Activated CD8-positive, alpha-beta memory T cell treated with anti-CD3 and anti-CD28 coated beads, Interleukin-2, amount 10 ng/mL, durations not matched to agents 7 days and 5 days (primary cell): ENCODE measurements at regions of chr17 and their contacts with region 1.

Region 1: DNA sequence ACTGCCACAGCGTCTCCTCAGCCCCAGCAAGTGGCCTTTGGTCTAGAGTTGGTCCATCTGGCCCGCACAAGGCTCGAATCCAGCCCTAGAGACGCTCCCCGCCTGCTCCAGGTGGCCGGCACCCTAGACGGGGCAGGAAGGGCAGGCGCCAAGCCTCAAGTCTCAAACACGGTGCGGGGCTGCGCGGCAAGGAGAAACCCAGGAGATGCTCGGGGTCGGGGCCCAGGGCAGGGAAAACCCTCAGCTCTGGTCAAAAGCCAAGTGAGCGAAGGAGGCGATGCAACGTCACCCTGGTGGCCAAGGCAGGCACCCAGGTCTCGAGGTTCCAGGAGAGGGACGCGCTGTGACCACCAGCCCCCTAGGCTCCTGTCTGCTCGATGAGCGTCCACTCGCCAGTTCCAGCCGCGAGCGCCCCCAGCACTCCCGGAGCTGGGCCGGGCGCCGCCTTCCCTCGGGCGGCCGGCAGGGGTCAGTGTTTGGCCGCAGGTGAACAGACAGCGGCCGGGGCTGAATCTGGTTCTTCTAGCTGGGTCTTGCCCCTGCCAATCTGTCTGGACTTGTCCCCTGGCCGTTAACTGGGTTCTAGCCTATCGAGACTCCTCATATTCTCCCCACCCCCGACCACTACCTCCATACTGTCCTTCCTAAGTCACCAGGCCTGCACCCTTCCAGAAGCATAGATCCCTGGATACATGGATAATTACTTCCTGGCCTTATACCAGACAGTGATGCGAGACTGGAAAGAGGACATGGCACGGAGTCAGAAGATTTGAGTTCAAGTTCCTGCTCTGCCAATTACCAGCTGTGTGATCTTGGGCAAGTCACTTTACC is 44.0 kb downstream of the PRAC1 start:
- DNase-seq: peak; percentile 78
- ATAC-seq: peak; percentile 98
- H3K4me3 Mint-ChIP-seq: no peak overlapping the region
- H3K27ac Mint-ChIP-seq: no peak overlapping the region
- H3K4me1 Mint-ChIP-seq: peaks cover 13% of the 10 kb centered on the region
- H3K27me3 Mint-ChIP-seq: peaks cover 59% of the 10 kb centered on the region

Region 2: DNA sequence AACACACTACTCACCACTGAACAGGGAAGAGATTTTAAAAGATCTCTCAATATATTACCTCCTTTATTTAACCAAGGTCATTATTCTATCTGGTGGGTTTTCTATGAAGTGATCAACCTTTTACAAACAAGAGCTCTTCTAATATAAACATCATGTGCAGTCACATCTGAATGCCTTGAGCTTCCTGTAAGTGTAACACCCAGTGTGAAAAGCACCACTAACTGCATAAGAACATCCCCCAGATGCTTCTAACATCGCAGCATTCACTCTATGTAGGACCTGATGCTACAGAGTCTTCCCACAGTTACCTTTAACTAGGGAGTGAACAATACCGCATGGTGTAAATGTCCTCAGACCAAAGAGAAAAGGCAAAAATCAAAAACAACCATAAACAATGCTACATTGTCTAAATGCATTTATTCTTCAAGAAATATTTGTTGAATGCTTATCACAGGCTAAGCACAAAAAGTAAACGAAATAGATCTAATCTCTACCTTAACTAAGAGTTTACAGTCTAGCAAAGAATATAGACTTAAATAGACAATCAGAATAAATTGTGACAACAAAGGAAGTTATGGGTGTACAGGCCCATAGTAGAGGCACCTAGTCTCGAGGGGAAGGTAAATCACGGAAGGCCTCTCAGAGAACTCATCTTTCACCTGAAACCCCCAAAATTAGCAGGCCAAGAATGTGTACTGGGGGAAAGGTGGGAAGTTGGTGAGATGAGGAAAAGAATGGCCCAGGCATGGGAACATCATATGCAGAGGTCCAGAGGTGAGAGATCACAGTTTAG is 264.5 kb before region 1 on chr17:
- CTCF ChIA-PET with region 1: no interaction called
- DNase-seq: no peak
- ATAC-seq: peak; percentile 62
- H3K4me3 Mint-ChIP-seq: peak overlapping the region; percentile 13
- H3K27ac Mint-ChIP-seq: peak overlapping the region; percentile 69
- H3K4me1 Mint-ChIP-seq: peaks cover 69% of the 10 kb centered on the region
- H3K27me3 Mint-ChIP-seq: no peaks in the 10 kb centered on the region

Region 3: DNA sequence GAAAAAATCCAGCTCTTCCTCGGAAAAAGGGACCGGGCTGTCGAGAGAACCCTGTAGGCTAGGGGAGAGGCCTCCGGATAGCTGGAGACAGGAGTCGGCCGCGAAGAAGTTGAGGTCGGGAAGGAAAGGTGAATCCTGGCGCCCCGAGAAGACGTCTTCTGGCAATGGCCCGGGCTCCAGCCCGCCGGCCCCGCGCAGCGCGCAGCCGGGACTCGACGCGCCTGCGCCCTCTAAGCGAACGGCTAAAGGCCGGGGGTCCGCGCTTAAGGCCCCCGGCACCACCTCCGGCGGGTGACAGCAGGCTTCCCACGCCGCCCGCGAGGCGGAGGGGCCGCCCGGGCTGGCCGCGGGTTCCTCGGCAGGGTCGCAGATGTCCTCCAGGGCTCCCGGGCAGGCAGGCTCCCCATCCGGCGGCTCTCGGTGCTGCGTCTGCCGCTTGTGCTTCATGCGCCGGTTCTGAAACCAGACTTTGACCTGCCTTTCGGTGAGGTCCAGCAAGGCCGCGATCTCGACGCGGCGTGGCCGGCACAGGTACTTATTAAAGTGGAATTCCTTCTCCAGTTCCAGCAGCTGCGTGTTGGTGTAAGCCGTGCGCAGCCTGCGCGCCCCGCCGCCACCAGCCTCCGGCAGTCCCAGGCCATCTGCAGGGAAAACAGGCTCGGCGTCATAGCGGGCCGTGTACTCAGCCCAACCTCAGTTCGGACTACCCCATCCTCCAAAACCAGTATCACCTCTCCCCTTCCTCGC is 135.1 kb before region 1 on chr17:
- CTCF ChIA-PET with region 1: no interaction called
- DNase-seq: peak; percentile 79
- ATAC-seq: peak; percentile 74
- H3K4me3 Mint-ChIP-seq: peak overlapping the region; percentile 88
- H3K27ac Mint-ChIP-seq: peak overlapping the region; percentile 95
- H3K4me1 Mint-ChIP-seq: peaks cover 43% of the 10 kb centered on the region
- H3K27me3 Mint-ChIP-seq: peaks cover 18% of the 10 kb centered on the region

Region 4: DNA sequence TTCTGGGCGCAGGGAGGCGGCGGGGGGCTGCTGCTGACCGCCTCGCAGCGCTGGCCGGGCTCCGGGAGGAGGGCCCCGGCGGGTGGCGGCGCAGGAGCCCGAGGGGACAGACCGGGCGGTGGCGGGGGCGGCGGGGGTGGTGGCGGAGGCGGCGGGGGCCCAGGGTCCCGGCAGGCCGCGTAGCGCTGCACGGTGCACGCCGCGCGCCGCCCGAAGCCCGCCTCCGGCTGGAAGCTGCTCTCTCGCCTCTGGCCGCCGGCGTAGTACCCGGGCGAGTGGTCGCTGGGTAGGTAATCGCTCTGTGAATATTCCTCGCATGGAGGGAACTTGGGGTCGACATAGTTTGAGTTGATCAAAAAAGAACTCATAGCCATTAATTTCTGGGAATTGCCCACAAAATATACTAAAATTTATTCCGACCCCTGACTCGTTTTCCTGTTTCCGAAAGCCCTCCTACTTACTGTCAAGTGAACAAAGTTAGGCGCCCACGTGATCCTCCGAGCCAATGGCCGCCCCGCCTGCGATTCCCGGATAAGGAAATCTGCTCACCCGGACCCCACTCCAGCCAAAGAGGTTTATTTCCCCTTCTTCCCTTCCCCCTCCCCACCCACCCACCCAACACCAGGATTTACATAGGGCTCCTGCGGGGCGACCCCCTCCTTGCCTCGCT is 100.3 kb before region 1 on chr17 and contains the start of gene HOXB4:
- CTCF ChIA-PET with region 1: no interaction called
- DNase-seq: peak; percentile 87
- ATAC-seq: peak; percentile 89
- H3K4me3 Mint-ChIP-seq: peak within 1 kb of the TSS; percentile 93
- H3K27ac Mint-ChIP-seq: peak within 1 kb of the TSS; percentile 89
- H3K4me1 Mint-ChIP-seq: peaks cover 51% of the 10 kb centered on the region
- H3K27me3 Mint-ChIP-seq: peaks cover 38% of the 10 kb centered on the region
- total RNA-seq, gene HOXB4: 7.8 TPM

Region 5: DNA sequence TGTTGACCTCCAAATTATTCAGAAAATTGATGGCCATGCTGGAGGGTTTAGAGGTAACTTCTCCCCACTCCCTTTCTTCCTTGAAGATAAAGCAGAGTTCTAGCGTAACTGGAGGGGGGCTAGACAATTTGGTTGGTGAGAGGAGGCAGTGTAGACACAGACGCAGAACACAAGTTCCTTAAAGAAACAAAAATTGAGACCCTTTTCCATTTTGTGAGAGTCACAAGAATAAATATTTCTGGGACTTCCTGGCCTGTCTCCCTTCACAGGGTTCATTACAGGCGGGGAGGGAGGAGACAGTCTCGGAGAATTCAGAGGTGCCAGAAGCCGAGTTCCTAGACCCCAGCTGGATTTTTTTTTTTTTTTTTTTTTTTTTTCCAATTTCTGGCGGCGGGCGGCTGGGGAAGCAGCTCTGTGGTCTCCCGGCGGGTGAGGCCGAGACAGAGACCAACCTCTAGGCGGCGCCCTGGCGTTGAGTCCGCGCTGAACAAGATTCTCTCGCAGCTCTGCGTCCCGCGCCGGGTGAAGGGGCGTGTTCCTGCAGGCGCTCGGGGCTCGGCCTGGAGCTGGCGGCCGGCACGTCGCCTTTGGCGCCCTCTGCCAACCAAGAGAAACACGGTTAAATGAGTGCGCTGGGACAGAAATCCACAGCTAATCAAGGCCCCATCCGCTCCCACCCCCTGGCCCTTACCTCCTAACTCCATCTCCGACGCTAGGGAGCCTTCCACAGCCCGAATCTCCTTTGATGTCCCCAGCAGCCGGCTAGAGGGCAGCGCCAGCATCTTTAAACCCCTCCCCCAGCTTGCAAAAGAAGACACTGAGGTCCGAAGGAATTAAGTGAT is 42.0 kb before region 1 on chr17:
- CTCF ChIA-PET with region 1: interaction called, 14 read pairs
- DNase-seq: peak; percentile 87
- ATAC-seq: peak; percentile 72
- H3K4me3 Mint-ChIP-seq: no peak overlapping the region
- H3K27ac Mint-ChIP-seq: no peak overlapping the region
- H3K4me1 Mint-ChIP-seq: peaks cover 34% of the 10 kb centered on the region
- H3K27me3 Mint-ChIP-seq: peaks cover 88% of the 10 kb centered on the region

Region 6: GRCh38 chr17:48704361-48705248 is 26.2 kb after region 1 on chr17:
- CTCF ChIA-PET with region 1: interaction called, 12 read pairs
- DNase-seq: no peak
- ATAC-seq: no peak
- H3K4me3 Mint-ChIP-seq: no peak overlapping the region
- H3K27ac Mint-ChIP-seq: no peak overlapping the region
- H3K4me1 Mint-ChIP-seq: no peaks in the 10 kb centered on the region
- H3K27me3 Mint-ChIP-seq: peaks cover 73% of the 10 kb centered on the region

Region 7: DNA sequence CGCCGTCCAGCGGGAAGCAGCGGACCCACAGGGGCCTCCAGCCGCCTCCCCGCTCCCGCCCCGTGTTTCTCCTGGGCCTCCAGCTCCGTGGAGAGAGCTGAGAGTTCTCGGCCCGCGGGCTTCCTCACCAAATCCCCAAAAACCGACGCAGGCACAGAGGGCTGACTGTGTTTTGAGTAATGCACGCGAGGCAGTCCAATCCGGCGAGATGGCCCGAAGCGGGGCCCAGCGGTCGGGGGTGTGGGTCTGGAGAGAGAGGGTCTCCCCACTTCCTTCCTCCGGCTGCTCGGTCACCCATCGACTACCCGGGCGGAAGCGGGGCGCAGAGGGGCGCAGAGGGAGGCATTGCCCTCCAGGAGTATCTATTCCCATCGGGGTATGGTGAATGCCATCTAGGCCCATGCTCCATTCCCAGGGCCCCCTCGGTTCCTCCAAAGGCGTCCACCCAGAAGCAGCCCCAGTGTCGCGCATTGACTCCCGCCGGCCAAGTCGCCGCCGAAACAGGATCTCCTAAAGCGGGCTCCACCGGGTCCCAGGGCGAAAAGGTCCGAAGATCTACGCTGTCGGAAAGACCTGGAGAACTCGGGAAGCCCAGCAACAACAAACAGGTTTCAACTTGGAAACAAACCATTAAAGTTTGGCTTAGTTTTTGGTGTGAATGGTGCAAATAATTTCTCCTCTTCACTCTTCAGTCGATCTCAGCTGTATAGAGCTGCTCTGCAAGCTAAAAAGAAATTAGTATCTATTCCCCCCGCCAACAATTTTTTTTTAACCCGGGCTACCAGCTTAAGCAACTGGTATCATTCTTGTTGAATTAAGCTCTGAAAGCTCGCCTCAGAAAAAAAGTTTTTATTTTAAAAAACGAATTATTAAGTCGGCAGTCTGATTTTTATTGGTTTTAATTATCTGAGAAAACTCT is 69.3 kb after region 1 on chr17:
- CTCF ChIA-PET with region 1: interaction called, 12 read pairs
- DNase-seq: no peak
- ATAC-seq: no peak
- H3K4me3 Mint-ChIP-seq: no peak overlapping the region
- H3K27ac Mint-ChIP-seq: no peak overlapping the region
- H3K4me1 Mint-ChIP-seq: peaks cover 4% of the 10 kb centered on the region
- H3K27me3 Mint-ChIP-seq: peaks cover 92% of the 10 kb centered on the region

Region 8: DNA sequence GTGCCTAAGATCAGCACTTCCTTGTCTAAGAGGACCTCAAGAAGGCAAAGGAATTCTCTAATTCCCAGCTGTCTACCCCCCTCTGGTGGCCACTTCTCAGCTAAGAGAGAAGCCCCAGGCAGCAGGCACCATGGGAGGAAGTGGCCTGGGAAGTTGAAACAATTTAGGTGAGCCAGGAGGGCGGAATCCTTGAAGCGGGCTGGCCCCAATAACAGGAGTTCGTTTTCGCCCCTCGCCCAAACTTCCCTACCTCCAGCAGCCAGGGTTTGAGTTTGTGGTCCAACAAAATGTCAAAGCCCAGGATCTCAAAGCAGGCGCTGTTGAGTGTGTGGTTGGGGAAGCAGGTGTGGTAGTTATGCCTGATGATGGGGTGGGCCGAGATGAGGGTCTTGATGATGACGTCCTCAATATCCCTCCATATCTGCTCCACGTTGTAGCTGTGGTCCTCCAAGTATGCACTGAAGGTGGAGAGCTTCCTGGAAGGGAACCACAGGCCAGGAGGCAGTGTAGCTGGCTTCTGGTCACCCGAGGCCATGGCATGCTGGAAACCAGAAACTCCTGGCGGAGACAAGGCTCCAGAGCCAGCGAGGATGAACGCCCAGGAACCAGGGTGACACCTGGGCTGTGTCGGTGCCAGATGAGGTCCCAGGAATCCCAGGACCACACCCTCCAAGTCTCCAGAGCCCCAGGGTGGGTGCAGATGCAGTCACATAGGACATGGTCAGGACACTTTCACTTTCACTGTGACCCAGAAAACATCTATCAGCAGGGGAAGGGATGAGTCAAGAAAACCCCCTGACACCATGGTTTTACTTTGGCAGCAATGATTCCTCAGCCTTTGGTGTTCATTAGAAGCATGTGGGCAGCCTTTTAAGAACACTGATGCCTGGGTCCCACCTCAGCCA is 113.0 kb after region 1 on chr17:
- CTCF ChIA-PET with region 1: interaction called, 15 read pairs
- DNase-seq: peak; percentile 52
- ATAC-seq: peak; percentile 72
- H3K4me3 Mint-ChIP-seq: no peak overlapping the region
- H3K27ac Mint-ChIP-seq: no peak overlapping the region
- H3K4me1 Mint-ChIP-seq: peaks cover 14% of the 10 kb centered on the region
- H3K27me3 Mint-ChIP-seq: peaks cover 50% of the 10 kb centered on the region

Region 9: GRCh38 chr17:48878918-48879898 is 200.9 kb after region 1 on chr17:
- CTCF ChIA-PET with region 1: interaction called, 59 read pairs
- DNase-seq: peak; percentile 71
- ATAC-seq: peak; percentile 81
- H3K4me3 Mint-ChIP-seq: no peak overlapping the region
- H3K27ac Mint-ChIP-seq: no peak overlapping the region
- H3K4me1 Mint-ChIP-seq: peaks cover 27% of the 10 kb centered on the region
- H3K27me3 Mint-ChIP-seq: peaks cover 3% of the 10 kb centered on the region

Region 10: DNA sequence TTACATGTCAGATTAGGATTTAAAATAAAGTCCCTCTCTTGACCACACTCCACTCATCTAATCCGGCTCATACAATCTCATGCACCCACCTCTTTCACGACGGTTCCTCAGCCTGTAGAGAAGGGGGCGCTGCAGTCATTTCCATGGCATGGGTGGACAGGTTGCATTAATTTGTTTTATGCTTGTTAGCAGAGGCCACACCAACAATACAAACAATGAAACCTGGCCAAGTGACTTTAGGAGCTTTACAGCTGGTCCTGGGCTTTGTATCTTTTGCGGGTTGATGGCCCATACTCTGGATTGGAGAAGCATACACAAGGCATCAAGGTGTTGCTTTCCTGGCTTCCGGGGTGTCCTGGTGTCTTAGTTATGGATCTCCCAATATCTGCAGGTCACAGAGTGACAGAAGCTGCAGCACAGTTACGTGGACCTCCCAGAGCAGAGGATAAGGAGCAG is 276.0 kb after region 1 on chr17:
- CTCF ChIA-PET with region 1: no interaction called
- DNase-seq: peak; percentile 43
- ATAC-seq: peak; percentile 61
- H3K4me3 Mint-ChIP-seq: no peak overlapping the region
- H3K27ac Mint-ChIP-seq: no peak overlapping the region
- H3K4me1 Mint-ChIP-seq: peaks cover 6% of the 10 kb centered on the region
- H3K27me3 Mint-ChIP-seq: peaks cover 16% of the 10 kb centered on the region